Posterior vena cava (tissue), 2 donors: ENCODE measurements at regions of chr17 and their contacts with region 1.

Region 1: DNA sequence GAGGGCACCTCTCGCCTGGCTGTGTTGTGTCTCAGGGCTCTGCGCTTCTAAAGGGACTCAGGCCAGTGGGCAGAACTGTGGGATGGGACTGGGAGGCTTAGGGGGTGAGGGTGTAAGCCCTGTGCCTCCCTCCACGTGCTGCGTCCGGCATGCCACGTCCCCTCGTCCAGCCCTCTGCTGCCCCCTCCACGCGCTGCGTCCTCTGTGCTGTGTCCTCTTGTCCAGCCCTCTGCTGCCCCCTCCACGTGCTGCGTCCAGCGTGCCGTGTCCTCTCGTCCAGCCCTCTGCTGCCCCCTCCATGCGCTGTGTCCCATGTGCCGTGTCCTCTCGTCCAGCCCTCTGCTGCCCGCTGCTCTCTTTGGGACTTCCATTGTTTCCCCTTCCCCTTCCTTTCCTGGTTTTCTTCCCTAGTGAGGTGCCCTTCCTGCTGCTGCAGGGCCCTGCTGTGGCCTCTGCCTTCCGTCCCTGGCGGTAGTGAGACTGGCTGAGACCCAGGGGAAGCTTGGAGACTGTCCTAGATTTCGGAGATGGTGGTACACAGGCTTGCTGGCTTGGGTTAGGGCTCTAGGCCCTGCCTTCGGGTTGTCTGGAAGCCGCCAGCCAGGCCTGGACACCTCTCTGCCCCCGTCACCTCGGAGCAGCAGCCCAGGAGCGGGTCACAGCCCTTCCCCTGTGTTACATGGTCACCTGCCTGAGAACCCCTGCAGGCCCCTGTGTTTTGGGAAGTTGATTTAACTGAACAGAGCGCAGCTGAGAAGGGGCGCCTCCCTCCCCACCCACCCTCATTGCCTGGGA is 6.4 kb upstream of the ZNF750 start:
- DNase-seq: peak; percentile 80

Region 2: DNA sequence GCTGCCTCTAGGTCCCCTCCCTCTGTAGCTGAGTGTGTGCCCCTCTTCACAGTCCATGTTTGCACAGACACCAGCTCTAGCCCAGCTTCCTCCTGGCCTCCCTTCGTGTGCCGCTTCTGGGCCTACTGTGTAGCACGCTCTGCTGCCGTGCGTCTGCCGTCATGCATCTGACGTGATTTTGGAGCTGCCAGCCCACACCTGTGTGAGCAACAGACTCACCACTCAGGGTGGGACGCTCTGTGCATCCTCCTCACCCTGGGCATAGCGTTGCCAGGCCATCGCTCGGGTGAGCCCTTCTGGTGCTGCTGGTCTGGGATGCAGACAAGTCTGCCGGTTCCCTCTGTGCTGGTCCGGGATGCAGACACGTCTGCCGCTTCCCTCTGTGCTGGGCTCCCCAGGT is 33.0 kb after region 1 on chr17:
- intact Hi-C with region 1: loop called in 1 of 2 experiments (anchors 1 kb)
- DNase-seq: peak; percentile 6